ENCODE measurements at regions of chr6 and their contacts with region 1.

Region 1: GRCh38 chr6:9754520-9754919 is 660.4 kb downstream of the TFAP2A start:
- DNase-seq: no peak
- ATAC-seq: no peak
- H3K4me3 ChIP-seq: no peak overlapping the region
- H3K27ac ChIP-seq: no peak overlapping the region
- H3K4me1 ChIP-seq: no peaks in the 10 kb centered on the region
- H3K27me3 ChIP-seq: no peaks in the 10 kb centered on the region
- CTCF ChIP-seq: no peak

Region 2: DNA sequence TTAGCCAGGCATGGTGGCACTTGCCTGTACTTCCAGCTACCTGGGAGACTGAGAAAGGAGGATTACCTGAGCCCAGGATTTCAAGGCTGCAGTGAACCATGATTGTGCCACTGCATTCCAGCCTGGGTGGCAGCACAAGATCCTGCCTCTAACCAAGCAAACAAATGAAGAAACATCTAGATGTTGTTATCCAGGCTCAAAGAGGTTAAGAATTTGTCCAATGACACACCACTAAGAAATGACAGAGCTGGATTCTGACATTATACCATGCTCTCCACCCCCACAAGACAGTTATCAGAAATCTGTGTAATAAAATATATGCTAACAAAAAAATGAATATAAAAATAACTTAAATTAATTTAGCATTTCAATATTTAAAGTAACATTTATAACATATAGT is 393.6 kb before region 1 on chr6:
- CTCF ChIA-PET with region 1: no interaction called
- POLR2A ChIA-PET with region 1: no interaction called
- in situ Hi-C with region 1: no loop called
- intact Hi-C with region 1: no loop called
- DNase-seq: no peak
- ATAC-seq: no peak
- H3K4me3 ChIP-seq: no peak overlapping the region
- H3K27ac ChIP-seq: no peak overlapping the region
- H3K4me1 ChIP-seq: no peaks in the 10 kb centered on the region
- H3K27me3 ChIP-seq: no peaks in the 10 kb centered on the region
- CTCF ChIP-seq: no peak

Region 3: DNA sequence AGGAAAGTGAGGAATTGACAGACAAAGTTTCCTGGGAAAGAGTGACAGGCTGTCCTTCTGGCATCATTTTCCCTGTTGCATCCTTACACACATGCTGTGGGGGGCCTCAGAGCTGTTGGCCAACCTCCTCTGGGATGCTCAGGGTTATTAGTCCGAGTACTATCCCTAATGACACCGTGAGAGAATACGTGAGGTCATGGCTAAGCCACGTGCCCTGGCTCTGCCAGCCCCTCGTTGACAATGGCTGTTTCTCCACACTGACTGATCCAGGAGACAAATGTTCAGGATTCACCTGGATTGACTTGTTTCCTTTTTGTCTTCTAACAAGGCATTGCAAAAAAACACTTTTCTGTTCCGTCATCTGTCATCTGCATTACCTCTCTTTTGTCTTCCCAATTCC is 55.8 kb after region 1 on chr6:
- CTCF ChIA-PET with region 1: no interaction called
- POLR2A ChIA-PET with region 1: no interaction called
- in situ Hi-C with region 1: no loop called
- intact Hi-C with region 1: loop called (anchors 2 kb)
- DNase-seq: no peak
- ATAC-seq: no peak
- H3K4me3 ChIP-seq: no peak overlapping the region
- H3K27ac ChIP-seq: no peak overlapping the region
- H3K4me1 ChIP-seq: no peaks in the 10 kb centered on the region
- H3K27me3 ChIP-seq: no peaks in the 10 kb centered on the region
- CTCF ChIP-seq: no peak

Measured in Panc1 (cell line).